Endothelial cell of umbilical vein (primary cell): ENCODE measurements at regions of chr6 and their contacts with region 1.

Region 1: DNA sequence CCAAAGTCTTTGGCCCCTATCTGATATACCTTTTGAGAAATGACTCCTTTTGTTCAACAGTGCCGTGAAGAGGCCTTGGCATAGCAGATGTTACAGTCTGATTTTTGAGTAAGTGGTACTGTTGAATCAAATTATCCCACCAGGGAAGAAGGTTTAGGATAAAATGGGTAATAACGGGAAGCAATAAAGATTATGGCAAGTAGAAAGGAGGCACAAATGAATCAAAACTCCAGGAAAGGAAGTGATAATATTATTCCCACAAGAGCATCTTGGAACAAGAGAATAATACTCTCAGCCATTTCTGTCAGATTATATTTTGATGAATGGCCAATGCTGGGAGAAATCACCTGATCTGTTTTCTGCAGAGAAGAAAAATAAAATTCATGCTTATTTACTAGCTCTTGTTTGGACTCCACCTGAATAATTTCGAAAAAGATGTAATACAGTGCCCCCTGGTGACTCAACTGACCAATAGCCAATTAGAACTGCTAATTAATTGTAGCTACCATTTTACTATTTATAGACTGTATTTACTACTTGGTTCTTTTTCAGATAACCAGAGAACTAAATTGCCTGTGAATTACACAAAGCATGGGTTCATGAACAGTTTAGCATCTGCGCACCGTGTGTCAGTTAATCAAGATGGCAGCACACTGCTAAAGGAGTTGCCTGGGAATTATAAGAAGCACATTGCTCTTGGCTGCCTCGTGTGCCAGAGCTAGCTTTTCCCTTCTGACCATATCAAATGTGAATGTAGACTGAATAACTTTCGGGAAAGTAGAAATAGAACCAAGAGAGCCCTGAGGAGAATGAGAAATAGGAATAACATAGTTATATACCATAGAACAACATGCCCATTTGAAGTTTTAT is 78.5 kb upstream of the TRDN start:
- DNase-seq: peak; percentile 55
- H3K4me3 ChIP-seq: no peak overlapping the region
- H3K27ac ChIP-seq: no peak overlapping the region
- H3K4me1 ChIP-seq: no peaks in the 10 kb centered on the region
- H3K27me3 ChIP-seq: peaks cover 5 to 6% of the 10 kb centered on the region in 2 experiments
- CTCF ChIP-seq: peak; percentile 35 to 36
- POLR2A ChIP-seq: no peak

Region 2: DNA sequence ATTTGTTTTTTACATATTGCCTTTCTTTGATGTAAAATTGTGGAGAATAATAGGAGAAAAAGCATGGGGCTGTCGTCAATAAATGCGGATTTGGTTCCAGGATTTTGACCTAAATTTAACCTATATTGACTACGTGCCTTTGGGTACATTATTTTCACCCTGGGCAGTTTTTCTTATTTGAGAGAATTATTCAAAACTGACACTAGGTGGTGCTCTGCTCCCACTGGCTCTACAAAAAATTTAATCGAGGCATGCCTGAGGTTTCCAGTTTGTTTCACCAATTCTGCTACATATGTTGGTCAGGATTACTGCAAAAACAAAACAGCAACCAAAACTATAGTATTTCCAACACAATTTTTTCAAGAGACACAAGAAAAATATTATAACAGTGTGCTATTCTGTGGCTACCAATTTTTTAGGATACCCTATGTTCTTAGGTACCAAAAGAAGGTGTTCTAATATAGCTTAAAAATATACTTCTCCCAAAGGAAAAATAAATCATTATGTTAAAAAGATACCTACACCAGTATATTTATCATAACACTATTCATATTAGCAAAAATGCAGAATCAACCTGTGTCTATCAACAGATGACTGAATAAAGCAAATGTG is 984.4 kb before region 1 on chr6:
- CTCF ChIA-PET with region 1: interaction called, 28 read pairs
- POLR2A ChIA-PET with region 1: no interaction called
- dilution Hi-C with region 1: no loop called
- intact Hi-C with region 1: loop called (anchors 2 kb)
- DNase-seq: peak; percentile 28
- H3K4me3 ChIP-seq: no peak overlapping the region
- H3K27ac ChIP-seq: no peak overlapping the region
- H3K4me1 ChIP-seq: no peaks in the 10 kb centered on the region
- H3K27me3 ChIP-seq: peaks cover 5 to 12% of the 10 kb centered on the region in 2 experiments
- CTCF ChIP-seq: peak; percentile 52 to 54
- POLR2A ChIP-seq: no peak

Region 3: GRCh38 chr6:123393328-123393727 is 321.9 kb before region 1 on chr6:
- CTCF ChIA-PET with region 1: interaction called, 91 read pairs
- POLR2A ChIA-PET with region 1: no interaction called
- dilution Hi-C with region 1: no loop called
- intact Hi-C with region 1: loop called (anchors 1 kb)
- DNase-seq: peak; percentile 12
- H3K4me3 ChIP-seq: no peak overlapping the region
- H3K27ac ChIP-seq: no peak overlapping the region
- H3K4me1 ChIP-seq: no peaks in the 10 kb centered on the region
- H3K27me3 ChIP-seq: no peaks in the 10 kb centered on the region
- CTCF ChIP-seq: no peak
- POLR2A ChIP-seq: no peak

Region 4: GRCh38 chr6:123427008-123427407 is 288.2 kb before region 1 on chr6:
- CTCF ChIA-PET with region 1: interaction called, 474 read pairs
- POLR2A ChIA-PET with region 1: no interaction called
- dilution Hi-C with region 1: no loop called
- intact Hi-C with region 1: no loop called
- DNase-seq: no peak
- H3K4me3 ChIP-seq: no peak overlapping the region
- H3K27ac ChIP-seq: no peak overlapping the region
- H3K4me1 ChIP-seq: no peaks in the 10 kb centered on the region
- H3K27me3 ChIP-seq: no peaks in the 10 kb centered on the region
- CTCF ChIP-seq: no peak
- POLR2A ChIP-seq: no peak

Region 5: DNA sequence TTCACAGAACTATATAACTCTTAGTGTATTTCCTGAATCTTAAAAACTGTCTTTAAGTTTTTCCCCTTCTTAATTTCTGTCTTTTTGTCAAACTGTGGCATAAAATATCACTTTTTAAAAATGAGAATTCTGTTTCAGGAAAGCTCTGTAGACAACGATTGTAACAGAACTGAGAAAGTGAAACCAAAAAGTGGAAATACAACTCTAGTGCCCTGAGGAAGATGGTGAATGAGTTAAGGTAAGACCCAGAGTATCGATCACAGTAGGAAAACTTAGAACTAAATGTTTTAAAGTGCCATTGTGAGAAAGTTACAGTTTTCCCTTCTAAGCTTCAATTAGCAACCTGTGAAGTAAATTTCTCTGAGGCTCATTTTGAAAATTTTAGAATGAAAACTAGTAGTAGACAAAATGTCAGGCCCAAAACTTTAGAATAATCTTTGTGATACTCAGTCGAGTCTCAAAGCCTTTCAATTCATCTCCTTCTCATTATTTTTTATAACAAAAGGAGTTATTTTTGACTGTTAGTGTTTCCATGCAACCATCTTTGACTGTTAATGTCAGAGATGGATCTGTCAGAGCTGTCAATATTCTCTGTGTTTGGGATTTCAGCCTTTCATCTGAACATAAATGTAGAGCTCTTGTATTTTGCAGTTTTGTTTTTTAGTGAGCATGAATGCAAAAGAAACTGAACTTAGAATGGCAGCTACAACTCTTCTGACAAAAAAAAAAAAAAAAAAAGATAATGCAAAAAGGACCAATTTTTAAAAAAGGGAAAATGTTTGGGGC is 59.5 kb before region 1 on chr6:
- CTCF ChIA-PET with region 1: interaction called, 12 read pairs
- POLR2A ChIA-PET with region 1: no interaction called
- dilution Hi-C with region 1: no loop called
- intact Hi-C with region 1: no loop called
- DNase-seq: peak; percentile 43
- H3K4me3 ChIP-seq: peak overlapping the region in 2 of 3 experiments; percentile 34 to 46
- H3K27ac ChIP-seq: peak overlapping the region; percentile 12
- H3K4me1 ChIP-seq: no peaks in the 10 kb centered on the region
- H3K27me3 ChIP-seq: no peaks in the 10 kb centered on the region
- CTCF ChIP-seq: no peak
- POLR2A ChIP-seq: no peak